Naive thymus-derived CD4-positive, alpha-beta T cell (primary cell): ENCODE measurements at regions of chr22 and their contacts with region 1.

Region 1: GRCh38 chr22:38755911-38756532 is at the start of gene SUN2:
- DNase-seq: peak; percentile 89 to 98 (median 92)
- ATAC-seq: peak; percentile 85
- H3K4me3 ChIP-seq: peak within 1 kb of the TSS; percentile 95
- H3K4me3 Mint-ChIP-seq: peak within 1 kb of the TSS; percentile 95 to 99 (median 96)
- H3K27ac ChIP-seq: peak within 1 kb of the TSS; percentile 81
- H3K27ac Mint-ChIP-seq: peak within 1 kb of the TSS; percentile 89 to 100 (median 99)
- H3K4me1 ChIP-seq: peaks cover 48 to 54% of the 10 kb centered on the region in 2 donors
- H3K4me1 Mint-ChIP-seq: peaks cover 42 to 67% (median 62%) of the 10 kb centered on the region in 7 donors
- H3K27me3 ChIP-seq: no peaks in the 10 kb centered on the region
- H3K27me3 Mint-ChIP-seq: no peaks in the 10 kb centered on the region
- total RNA-seq, gene SUN2: 509 to 977 (median 558) TPM

Region 2: GRCh38 chr22:38656256-38657044 is 99.6 kb before region 1 on chr22 and contains the starts of genes CBY1 and FAM227A:
- CTCF ChIA-PET with region 1: no interaction called
- POLR2A ChIA-PET with region 1: no interaction called
- intact Hi-C with region 1: loop called in 1 of 2 experiments (anchors 2 kb)
- DNase-seq: peak; percentile 79 to 94 (median 85)
- ATAC-seq: peak; percentile 92
- H3K4me3 ChIP-seq: peak within 1 kb of the TSS; percentile 98
- H3K4me3 Mint-ChIP-seq: peak within 1 kb of the TSS; percentile 94 to 96 (median 96)
- H3K27ac ChIP-seq: peak within 1 kb of the TSS; percentile 93
- H3K27ac Mint-ChIP-seq: peak within 1 kb of the TSS; percentile 92 to 99 (median 98)
- H3K4me1 ChIP-seq: peaks cover 4 to 9% of the 10 kb centered on the region in 2 donors
- H3K4me1 Mint-ChIP-seq: peaks cover 4 to 23% (median 18%) of the 10 kb centered on the region in 7 donors
- H3K27me3 ChIP-seq: no peaks in the 10 kb centered on the region
- H3K27me3 Mint-ChIP-seq: no peaks in the 10 kb centered on the region
- total RNA-seq, gene CBY1: 12.2 to 39.9 (median 15.2) TPM
- total RNA-seq, gene FAM227A: 0.05 to 1.0 (median 0.30) TPM in 4 of 5 experiments, not detected in the other

Region 3: GRCh38 chr22:38733329-38733723 is 22.7 kb before region 1 on chr22:
- CTCF ChIA-PET with region 1: interaction called, 24 read pairs
- POLR2A ChIA-PET with region 1: interaction called, 1,007 read pairs
- intact Hi-C with region 1: loop called (anchors 1 to 2 kb)
- DNase-seq: peak in 5 of 9 donors; percentile 37 to 55 (median 49)
- ATAC-seq: peak; percentile 67
- H3K4me3 ChIP-seq: no peak overlapping the region
- H3K4me3 Mint-ChIP-seq: peak overlapping the region in 4 of 10 donors; percentile 11 to 51 (median 40)
- H3K27ac ChIP-seq: peak overlapping the region; percentile 54
- H3K27ac Mint-ChIP-seq: peak overlapping the region; percentile 76 to 91 (median 87)
- H3K4me1 ChIP-seq: peaks cover 15 to 18% of the 10 kb centered on the region in 2 donors
- H3K4me1 Mint-ChIP-seq: peaks cover 25 to 63% (median 53%) of the 10 kb centered on the region in 7 donors
- H3K27me3 ChIP-seq: no peaks in the 10 kb centered on the region
- H3K27me3 Mint-ChIP-seq: no peaks in the 10 kb centered on the region

Region 4: GRCh38 chr22:38766076-38766777 is 10.2 kb after region 1 on chr22:
- CTCF ChIA-PET with region 1: interaction called, 7 read pairs
- POLR2A ChIA-PET with region 1: interaction called, 1,007 read pairs
- intact Hi-C with region 1: loop called in 1 of 2 experiments (anchors 1 kb)
- DNase-seq: peak in 6 of 9 donors; percentile 32 to 48 (median 38)
- ATAC-seq: peak; percentile 69
- H3K4me3 ChIP-seq: no peak overlapping the region
- H3K4me3 Mint-ChIP-seq: no peak overlapping the region
- H3K27ac ChIP-seq: no peak overlapping the region
- H3K27ac Mint-ChIP-seq: peak overlapping the region in 5 of 9 donors; percentile 12 to 42 (median 19)
- H3K4me1 ChIP-seq: no peaks in the 10 kb centered on the region
- H3K4me1 Mint-ChIP-seq: peaks cover 4 to 10% (median 9%) of the 10 kb centered on the region in 7 donors
- H3K27me3 ChIP-seq: no peaks in the 10 kb centered on the region
- H3K27me3 Mint-ChIP-seq: no peaks in the 10 kb centered on the region

Region 5: DNA sequence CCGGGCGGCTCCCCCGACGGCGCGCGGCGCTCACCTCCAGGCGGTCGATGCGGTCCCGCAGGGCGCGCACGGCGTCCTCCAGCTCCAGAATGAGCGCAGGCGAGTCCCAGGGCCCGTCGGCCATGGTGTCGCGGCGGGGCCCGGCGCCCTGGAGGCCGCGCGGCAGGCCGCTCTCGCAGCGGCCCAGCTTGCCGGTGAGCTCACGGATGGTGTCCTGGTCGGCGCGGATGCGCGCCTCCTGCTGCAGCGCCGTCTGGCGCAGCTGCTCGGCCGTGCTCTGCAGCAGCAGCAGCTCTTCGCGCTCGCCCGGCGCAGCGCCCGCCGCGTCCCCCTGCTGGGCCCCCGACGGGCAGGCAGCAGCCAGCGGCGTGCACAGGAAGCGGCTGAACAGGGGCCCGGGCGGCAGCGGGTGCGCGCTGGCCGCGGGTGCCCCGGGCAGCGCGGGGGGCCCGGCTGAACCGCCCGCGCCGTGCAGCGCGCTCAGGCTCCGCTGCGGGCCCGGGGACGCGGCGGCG is 87.2 kb after region 1 on chr22:
- CTCF ChIA-PET with region 1: interaction called, 3 read pairs
- POLR2A ChIA-PET with region 1: interaction called, 17 read pairs
- intact Hi-C with region 1: loop called (anchors 2 to 5 kb)
- DNase-seq: peak; percentile 35 to 67 (median 61)
- ATAC-seq: peak; percentile 89
- H3K4me3 ChIP-seq: peak overlapping the region; percentile 50
- H3K4me3 Mint-ChIP-seq: peak overlapping the region in 4 of 10 donors; percentile 37 to 90 (median 74)
- H3K27ac ChIP-seq: no peak overlapping the region
- H3K27ac Mint-ChIP-seq: peak overlapping the region in 1 of 9 donors; percentile 62
- H3K4me1 ChIP-seq: peaks cover 0 to 14% of the 10 kb centered on the region in 2 donors
- H3K4me1 Mint-ChIP-seq: peaks cover 9 to 40% (median 35%) of the 10 kb centered on the region in 7 donors
- H3K27me3 ChIP-seq: no peaks in the 10 kb centered on the region
- H3K27me3 Mint-ChIP-seq: peaks cover 0 to 69% (median 0%) of the 10 kb centered on the region in 5 donors

Region 6: GRCh38 chr22:39253435-39254070 is 497.5 kb after region 1 on chr22:
- CTCF ChIA-PET with region 1: no interaction called
- POLR2A ChIA-PET with region 1: no interaction called
- intact Hi-C with region 1: no loop called
- DNase-seq: peak in 1 of 9 donors; percentile 65
- ATAC-seq: peak; percentile 43
- H3K4me3 ChIP-seq: no peak overlapping the region
- H3K4me3 Mint-ChIP-seq: peak overlapping the region in 1 of 10 donors; percentile 40
- H3K27ac ChIP-seq: no peak overlapping the region
- H3K27ac Mint-ChIP-seq: peak overlapping the region in 1 of 9 donors; percentile 42
- H3K4me1 ChIP-seq: peaks cover 12 to 26% of the 10 kb centered on the region in 2 donors
- H3K4me1 Mint-ChIP-seq: peaks cover 0 to 28% (median 10%) of the 10 kb centered on the region in 7 donors
- H3K27me3 ChIP-seq: no peaks in the 10 kb centered on the region
- H3K27me3 Mint-ChIP-seq: peaks cover 0 to 48% (median 22%) of the 10 kb centered on the region in 5 donors